Naive thymus-derived CD8-positive, alpha-beta T cell (primary cell): ENCODE measurements at regions of chr22 and their contacts with region 1.

Region 1: DNA sequence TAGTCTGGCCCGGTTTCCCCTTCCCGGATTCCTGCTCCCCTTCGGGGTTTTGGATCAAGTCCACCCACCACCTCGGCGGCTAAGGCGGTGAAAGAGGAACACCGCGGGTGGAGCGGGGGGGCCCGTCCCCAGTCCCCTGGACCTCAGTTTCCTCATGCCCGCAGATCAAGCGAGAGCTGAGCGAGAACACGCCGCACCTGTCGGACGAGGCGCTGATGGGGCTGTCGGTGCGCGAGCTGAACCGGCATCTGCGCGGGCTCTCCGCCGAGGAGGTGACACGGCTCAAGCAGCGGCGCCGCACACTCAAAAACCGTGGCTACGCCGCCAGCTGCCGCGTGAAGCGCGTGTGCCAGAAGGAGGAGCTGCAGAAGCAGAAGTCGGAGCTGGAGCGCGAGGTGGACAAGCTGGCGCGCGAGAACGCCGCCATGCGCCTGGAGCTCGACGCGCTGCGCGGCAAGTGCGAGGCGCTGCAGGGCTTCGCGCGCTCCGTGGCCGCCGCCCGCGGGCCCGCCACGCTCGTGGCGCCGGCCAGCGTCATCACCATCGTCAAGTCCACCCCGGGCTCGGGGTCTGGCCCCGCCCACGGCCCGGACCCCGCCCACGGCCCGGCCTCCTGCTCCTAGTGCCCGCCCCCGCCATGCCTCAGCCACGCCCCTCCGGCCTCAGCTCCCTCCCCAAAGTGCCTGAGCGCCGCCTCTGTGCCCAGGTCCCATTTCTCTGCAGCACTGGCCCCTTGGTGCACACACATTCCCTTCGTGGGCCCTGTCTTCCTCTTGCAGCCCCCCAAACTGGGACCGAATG is 12.7 kb downstream of the MAFF start:
- DNase-seq: peak; percentile 50 to 81 (median 66)
- ATAC-seq: peak; percentile 79 to 81
- H3K4me3 Mint-ChIP-seq: peak overlapping the region; percentile 39 to 81 (median 60)
- H3K27ac Mint-ChIP-seq: peak overlapping the region in 6 of 10 donors; percentile 6 to 77 (median 66)
- H3K4me1 Mint-ChIP-seq: peaks cover 4 to 25% (median 20%) of the 10 kb centered on the region in 4 donors
- H3K27me3 Mint-ChIP-seq: no peaks in the 10 kb centered on the region

Region 2: GRCh38 chr22:38114484-38115398 is 99.7 kb before region 1 on chr22:
- POLR2A ChIA-PET with region 1: no interaction called
- DNase-seq: peak; percentile 37 to 81 (median 70)
- ATAC-seq: peak; percentile 90 to 93
- H3K4me3 Mint-ChIP-seq: no peak overlapping the region
- H3K27ac Mint-ChIP-seq: peak overlapping the region in 2 of 10 donors; percentile 51 to 90
- H3K4me1 Mint-ChIP-seq: peaks cover 0 to 8% (median 6%) of the 10 kb centered on the region in 4 donors
- H3K27me3 Mint-ChIP-seq: no peaks in the 10 kb centered on the region

Region 3: DNA sequence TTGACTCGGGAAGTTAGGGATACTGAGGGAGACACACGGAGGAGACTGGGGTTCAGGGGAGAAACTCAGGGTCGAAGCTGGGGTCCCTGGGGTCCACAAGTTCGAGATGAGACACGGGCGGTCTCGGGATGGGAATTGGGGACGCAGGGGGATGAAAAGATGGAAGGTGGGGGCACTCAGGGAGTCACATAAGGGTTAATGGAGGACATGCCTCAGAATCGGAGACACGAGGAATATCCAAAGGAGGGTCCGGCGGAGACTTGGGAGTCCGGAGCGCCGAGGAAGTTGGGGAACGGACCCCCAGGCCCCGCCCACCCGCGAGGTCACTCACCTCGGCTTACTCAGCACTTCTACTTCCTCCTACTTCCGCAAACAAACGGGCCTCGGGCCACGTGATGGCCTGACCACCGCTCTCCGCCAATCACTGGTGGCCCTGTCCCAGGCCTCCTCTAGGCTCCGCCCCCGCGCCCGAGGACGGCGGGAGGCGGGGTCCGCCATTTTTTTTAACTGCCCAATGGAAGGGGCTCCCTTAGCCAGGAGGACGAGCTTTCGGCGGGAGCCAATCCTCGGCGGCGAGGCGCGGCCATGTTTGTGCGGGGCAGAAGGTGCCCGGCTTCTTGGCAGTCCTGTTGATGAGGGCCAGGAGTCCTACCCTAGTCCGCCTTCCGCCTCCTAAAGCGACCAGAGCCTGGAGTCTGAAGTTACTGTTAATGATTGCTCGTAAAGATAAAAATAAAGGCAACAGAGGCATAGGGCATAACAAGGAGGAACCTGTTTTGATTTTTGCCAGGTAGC is 32.8 kb before region 1 on chr22 and contains the start of gene PLA2G6:
- POLR2A ChIA-PET with region 1: interaction called, 15 read pairs
- DNase-seq: peak; percentile 86 to 97 (median 92)
- ATAC-seq: peak; percentile 88 to 94
- H3K4me3 Mint-ChIP-seq: peak within 1 kb of the TSS; percentile 85 to 98 (median 94)
- H3K27ac Mint-ChIP-seq: peak within 1 kb of the TSS; percentile 86 to 97 (median 92)
- H3K4me1 Mint-ChIP-seq: peaks cover 26 to 50% (median 41%) of the 10 kb centered on the region in 4 donors
- H3K27me3 Mint-ChIP-seq: no peaks in the 10 kb centered on the region
- polyA plus RNA-seq, gene PLA2G6: 2.6 to 7.2 (median 2.6) TPM

Region 4: GRCh38 chr22:38201710-38202436 is 12.6 kb before region 1 on chr22 and contains the start of gene MAFF:
- POLR2A ChIA-PET with region 1: interaction called, 11 read pairs
- DNase-seq: peak; percentile 76 to 93 (median 79)
- ATAC-seq: peak; percentile 72 to 75
- H3K4me3 Mint-ChIP-seq: peak within 1 kb of the TSS; percentile 72 to 93 (median 88)
- H3K27ac Mint-ChIP-seq: peak within 1 kb of the TSS; percentile 89 to 99 (median 97)
- H3K4me1 Mint-ChIP-seq: peaks cover 22 to 50% (median 36%) of the 10 kb centered on the region in 4 donors
- H3K27me3 Mint-ChIP-seq: no peaks in the 10 kb centered on the region
- polyA plus RNA-seq, gene MAFF: 2.6 to 3.3 (median 3.0) TPM